ENCODE measurements at regions of chr5 and their contacts with region 1.

Region 1: DNA sequence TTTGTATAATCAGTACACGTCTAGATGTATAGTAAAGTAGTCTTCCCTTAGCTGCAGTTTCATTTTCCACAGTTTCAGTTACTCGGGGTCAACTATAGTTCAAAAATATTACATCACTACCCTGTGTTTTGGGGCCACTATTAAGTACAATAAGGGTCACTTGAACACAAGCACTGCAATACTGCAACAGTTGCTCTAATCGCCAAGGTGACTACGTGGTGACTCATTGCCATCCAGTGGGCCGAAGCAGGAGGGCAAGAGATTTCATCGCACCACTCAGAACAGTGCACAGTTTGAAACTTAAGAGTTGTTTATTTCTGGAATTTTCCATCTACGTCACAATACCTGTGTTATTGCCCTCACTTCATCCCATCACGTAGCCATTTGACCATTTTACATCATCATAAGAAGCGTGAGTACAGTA is at the start of gene ARL14EPL:
- DNase-seq: peak; percentile 98
- H3K4me3 ChIP-seq: peak within 1 kb of the TSS in 1 of 3 experiments; percentile 33
- H3K27ac ChIP-seq: peak within 1 kb of the TSS; percentile 45
- H3K4me1 ChIP-seq: peaks cover 14% of the 10 kb centered on the region
- H3K27me3 ChIP-seq: no peaks in the 10 kb centered on the region
- CTCF ChIP-seq: peak; percentile 34 to 49
- POLR2A ChIP-seq: no peak
- total RNA-seq, gene ARL14EPL: 0.58 TPM in 1 of 2 replicates, not detected in the other

Region 2: DNA sequence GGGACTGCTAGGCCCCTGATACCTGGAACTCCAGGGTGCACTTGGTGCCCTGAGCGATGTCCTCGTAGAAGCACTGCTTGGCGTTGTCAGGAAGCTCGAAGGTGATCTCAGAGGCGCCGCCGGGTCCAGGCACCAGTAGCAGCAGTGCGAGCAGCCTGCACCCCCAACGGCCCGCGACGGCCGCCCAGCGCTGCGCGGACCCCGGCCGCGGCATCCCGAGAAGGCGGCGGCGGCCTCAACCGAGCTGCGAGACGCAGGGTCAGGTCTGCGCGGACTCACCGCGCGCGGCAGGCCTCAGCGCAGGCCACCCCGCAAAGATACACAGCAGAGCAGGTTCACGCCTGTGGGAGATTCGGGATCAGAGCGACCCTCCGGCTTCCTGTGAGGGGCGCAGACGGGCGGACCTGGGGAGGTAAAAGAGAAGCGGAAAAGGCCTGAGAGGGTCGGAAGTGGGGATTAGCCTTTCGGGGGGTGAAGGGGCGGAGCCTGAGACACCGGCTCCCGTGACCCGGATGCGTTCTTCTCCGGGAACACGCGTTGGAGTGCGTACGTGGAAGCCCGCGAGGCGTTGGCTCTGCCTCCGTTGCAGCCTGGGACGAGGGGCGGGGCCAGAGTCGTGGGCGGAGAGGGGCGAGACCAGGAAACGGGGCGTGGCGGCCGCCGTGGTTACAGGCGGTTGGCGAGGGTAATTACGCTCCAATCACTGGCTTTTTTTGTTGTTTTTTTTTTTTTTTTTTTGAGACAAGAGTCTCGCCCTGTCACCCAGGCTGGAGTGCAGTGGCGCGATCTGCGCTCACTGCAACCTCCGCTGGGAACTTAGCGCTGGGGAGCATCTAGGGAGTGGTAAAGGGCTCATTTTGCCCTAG is 406.3 kb before region 1 on chr5 and contains the start of gene TMED7:
- CTCF ChIA-PET with region 1: no interaction called
- POLR2A ChIA-PET with region 1: no interaction called
- dilution Hi-C with region 1: no loop called
- intact Hi-C with region 1: loop called (anchors 2 kb)
- DNase-seq: peak; percentile 99
- H3K4me3 ChIP-seq: peak within 1 kb of the TSS; percentile 86 to 98 (median 90)
- H3K27ac ChIP-seq: peak within 1 kb of the TSS; percentile 83
- H3K4me1 ChIP-seq: peaks cover 30% of the 10 kb centered on the region
- H3K27me3 ChIP-seq: no peaks in the 10 kb centered on the region
- CTCF ChIP-seq: no peak
- POLR2A ChIP-seq: peak; percentile 96
- total RNA-seq, gene TMED7: 101 TPM in 2 replicates

Region 3: GRCh38 chr5:115702025-115702424 is 330.1 kb before region 1 on chr5:
- CTCF ChIA-PET with region 1: no interaction called
- POLR2A ChIA-PET with region 1: no interaction called
- dilution Hi-C with region 1: no loop called
- intact Hi-C with region 1: no loop called
- DNase-seq: no peak
- H3K4me3 ChIP-seq: no peak overlapping the region
- H3K27ac ChIP-seq: no peak overlapping the region
- H3K4me1 ChIP-seq: no peaks in the 10 kb centered on the region
- H3K27me3 ChIP-seq: no peaks in the 10 kb centered on the region
- CTCF ChIP-seq: no peak
- POLR2A ChIP-seq: no peak

Region 4: GRCh38 chr5:115888027-115888426 is 144.1 kb before region 1 on chr5:
- CTCF ChIA-PET with region 1: interaction called, 34 read pairs
- POLR2A ChIA-PET with region 1: no interaction called
- dilution Hi-C with region 1: no loop called
- intact Hi-C with region 1: loop called (anchors 1 kb)
- DNase-seq: peak; percentile 56
- H3K4me3 ChIP-seq: no peak overlapping the region
- H3K27ac ChIP-seq: no peak overlapping the region
- H3K4me1 ChIP-seq: no peaks in the 10 kb centered on the region
- H3K27me3 ChIP-seq: no peaks in the 10 kb centered on the region
- CTCF ChIP-seq: no peak
- POLR2A ChIP-seq: no peak

Region 5: DNA sequence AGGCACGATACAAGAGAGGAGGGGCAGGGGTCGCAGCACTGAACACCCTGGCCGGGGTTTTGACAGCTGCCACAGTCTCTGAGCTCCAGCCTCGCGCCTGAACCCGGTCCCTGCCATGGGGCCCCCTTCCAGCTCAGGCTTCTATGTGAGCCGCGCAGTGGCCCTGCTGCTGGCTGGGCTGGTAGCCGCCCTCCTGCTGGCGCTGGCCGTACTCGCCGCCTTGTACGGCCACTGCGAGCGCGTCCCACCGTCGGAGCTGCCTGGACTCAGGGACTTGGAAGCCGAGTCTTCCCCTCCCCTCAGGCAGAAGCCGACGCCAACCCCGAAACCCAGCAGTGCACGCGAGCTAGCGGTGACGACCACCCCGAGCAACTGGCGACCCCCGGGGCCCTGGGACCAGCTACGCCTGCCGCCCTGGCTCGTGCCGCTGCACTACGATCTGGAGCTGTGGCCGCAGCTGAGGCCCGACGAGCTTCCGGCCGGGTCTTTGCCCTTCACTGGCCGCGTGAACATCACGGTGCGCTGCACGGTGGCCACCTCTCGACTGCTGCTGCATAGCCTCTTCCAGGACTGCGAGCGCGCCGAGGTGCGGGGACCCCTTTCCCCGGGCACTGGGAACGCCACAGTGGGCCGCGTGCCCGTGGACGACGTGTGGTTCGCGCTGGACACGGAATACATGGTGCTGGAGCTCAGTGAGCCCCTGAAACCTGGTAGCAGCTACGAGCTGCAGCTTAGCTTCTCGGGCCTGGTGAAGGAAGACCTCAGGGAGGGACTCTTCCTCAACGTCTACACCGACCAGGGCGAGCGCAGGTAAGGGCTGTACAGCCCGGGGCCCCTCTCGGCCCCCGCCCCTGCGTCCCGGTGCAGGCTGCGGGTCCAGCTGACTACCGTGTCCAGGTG is 69.4 kb before region 1 on chr5:
- CTCF ChIA-PET with region 1: interaction called, 14 read pairs
- POLR2A ChIA-PET with region 1: no interaction called
- dilution Hi-C with region 1: no loop called
- intact Hi-C with region 1: loop called (anchors 5 kb)
- DNase-seq: peak; percentile 43
- H3K4me3 ChIP-seq: peak overlapping the region; percentile 12 to 48 (median 32)
- H3K27ac ChIP-seq: no peak overlapping the region
- H3K4me1 ChIP-seq: peaks cover 11% of the 10 kb centered on the region
- H3K27me3 ChIP-seq: peaks cover 3 to 40% of the 10 kb centered on the region in 2 experiments
- CTCF ChIP-seq: peak in 1 of 2 donors; percentile 9
- POLR2A ChIP-seq: no peak

Region 6: DNA sequence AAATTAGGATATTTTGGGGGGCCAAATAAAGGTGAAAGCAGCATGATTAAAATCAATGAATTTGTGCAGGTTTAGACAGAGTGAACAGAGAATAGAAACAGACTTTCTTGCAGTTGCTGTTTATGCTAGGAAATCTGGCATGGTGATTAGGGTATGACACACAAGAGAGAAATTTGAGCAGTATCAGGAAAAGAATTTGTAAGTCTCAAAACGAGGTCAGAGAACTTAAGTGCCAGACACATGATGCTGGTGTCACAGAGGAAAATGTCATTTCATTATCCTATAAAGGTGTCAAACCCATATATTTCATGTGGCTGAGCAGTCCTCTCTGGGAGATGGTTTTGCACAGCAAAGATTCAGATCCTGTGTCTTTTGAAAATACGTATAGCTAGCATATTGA is 54.1 kb before region 1 on chr5:
- CTCF ChIA-PET with region 1: interaction called, 6 read pairs
- POLR2A ChIA-PET with region 1: no interaction called
- dilution Hi-C with region 1: no loop called
- intact Hi-C with region 1: loop called (anchors 2 kb)
- DNase-seq: peak; percentile 90
- H3K4me3 ChIP-seq: no peak overlapping the region
- H3K27ac ChIP-seq: peak overlapping the region; percentile 45
- H3K4me1 ChIP-seq: peaks cover 19% of the 10 kb centered on the region
- H3K27me3 ChIP-seq: no peaks in the 10 kb centered on the region
- CTCF ChIP-seq: no peak
- POLR2A ChIP-seq: peak; percentile 54

Region 7: DNA sequence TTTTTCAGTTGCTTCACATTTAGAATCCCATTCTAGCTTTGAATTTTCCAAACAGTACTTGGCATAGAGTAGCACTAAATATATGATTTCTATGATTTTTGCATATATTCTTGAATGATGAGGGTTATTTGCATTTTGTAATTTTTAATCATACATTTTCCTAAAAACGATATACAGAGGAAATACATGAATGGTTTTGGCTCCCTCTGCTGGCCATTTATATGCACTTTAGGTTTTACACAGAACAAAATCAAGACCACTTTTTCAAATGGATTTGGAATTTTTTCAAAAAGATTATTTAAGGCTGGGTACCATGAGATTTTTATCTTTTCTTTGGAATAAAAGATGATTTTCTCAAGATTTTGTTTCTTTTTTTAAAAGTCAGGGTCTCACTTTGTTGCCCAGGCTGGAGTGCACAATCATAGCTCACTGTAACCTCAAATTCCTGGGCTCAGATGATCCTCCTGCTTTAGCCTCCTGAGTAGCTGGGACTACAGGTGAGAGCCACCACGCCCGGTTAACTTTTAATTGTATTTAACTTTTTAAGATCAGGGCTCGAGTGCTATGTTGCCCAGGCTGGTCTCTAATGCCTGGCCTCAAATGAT is 36.0 kb after region 1 on chr5:
- CTCF ChIA-PET with region 1: interaction called, 12 read pairs
- POLR2A ChIA-PET with region 1: no interaction called
- dilution Hi-C with region 1: no loop called
- intact Hi-C with region 1: no loop called
- DNase-seq: peak; percentile 61
- H3K4me3 ChIP-seq: no peak overlapping the region
- H3K27ac ChIP-seq: no peak overlapping the region
- H3K4me1 ChIP-seq: no peaks in the 10 kb centered on the region
- H3K27me3 ChIP-seq: peaks cover 0 to 7% of the 10 kb centered on the region in 2 experiments
- CTCF ChIP-seq: peak; percentile 43 to 51
- POLR2A ChIP-seq: no peak

Region 8: DNA sequence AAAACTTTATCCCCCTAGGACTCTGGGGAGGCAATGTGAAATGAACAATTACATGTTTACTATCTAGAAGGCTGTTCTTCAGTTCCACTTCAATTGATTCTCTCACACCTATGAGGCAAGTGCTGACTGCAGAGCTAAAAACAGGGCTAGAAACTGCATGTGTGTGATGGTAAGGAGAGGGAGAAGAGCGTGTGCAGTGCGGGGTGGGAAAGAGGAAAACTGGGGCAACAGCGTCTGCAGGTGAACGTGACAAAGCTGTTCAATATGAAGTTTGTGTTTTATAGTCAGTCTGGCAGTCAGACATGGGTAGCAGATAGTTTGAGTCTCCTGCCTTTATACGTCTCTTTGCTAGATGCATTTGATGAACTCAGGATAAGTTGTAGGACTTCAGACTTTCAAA is 46.1 kb after region 1 on chr5:
- CTCF ChIA-PET with region 1: no interaction called
- POLR2A ChIA-PET with region 1: no interaction called
- dilution Hi-C with region 1: no loop called
- intact Hi-C with region 1: no loop called
- DNase-seq: no peak
- H3K4me3 ChIP-seq: no peak overlapping the region
- H3K27ac ChIP-seq: no peak overlapping the region
- H3K4me1 ChIP-seq: no peaks in the 10 kb centered on the region
- H3K27me3 ChIP-seq: no peaks in the 10 kb centered on the region
- CTCF ChIP-seq: no peak
- POLR2A ChIP-seq: no peak

Measured in endothelial cell of umbilical vein (primary cell).